ENCODE measurements at regions of chr6 and their contacts with region 1.

Region 1: GRCh38 chr6:90790696-90791095 is 203.8 kb upstream of the MAP3K7 start:
- DNase-seq: peak; percentile 86
- ATAC-seq: peak; percentile 94
- H3K4me3 ChIP-seq: no peak overlapping the region
- H3K27ac ChIP-seq: peak overlapping the region; percentile 60
- H3K4me1 ChIP-seq: peaks cover 7% of the 10 kb centered on the region
- H3K27me3 ChIP-seq: no peaks in the 10 kb centered on the region
- CTCF ChIP-seq: no peak
- POLR2A ChIP-seq: no peak
- RAD21 ChIP-seq: no peak

Region 2: GRCh38 chr6:90537723-90538258 is 252.9 kb before region 1 on chr6:
- CTCF ChIA-PET with region 1: no interaction called
- POLR2A ChIA-PET with region 1: no interaction called
- dilution Hi-C with region 1: no loop called
- in situ Hi-C with region 1: no loop called
- intact Hi-C with region 1: loop called (anchors 5 kb)
- DNase-seq: no peak
- ATAC-seq: no peak
- H3K4me3 ChIP-seq: no peak overlapping the region
- H3K27ac ChIP-seq: no peak overlapping the region
- H3K4me1 ChIP-seq: no peaks in the 10 kb centered on the region
- H3K27me3 ChIP-seq: no peaks in the 10 kb centered on the region
- CTCF ChIP-seq: no peak
- POLR2A ChIP-seq: no peak
- RAD21 ChIP-seq: no peak